ENCODE measurements at regions of chr1 and their contacts with region 1.

Region 1: DNA sequence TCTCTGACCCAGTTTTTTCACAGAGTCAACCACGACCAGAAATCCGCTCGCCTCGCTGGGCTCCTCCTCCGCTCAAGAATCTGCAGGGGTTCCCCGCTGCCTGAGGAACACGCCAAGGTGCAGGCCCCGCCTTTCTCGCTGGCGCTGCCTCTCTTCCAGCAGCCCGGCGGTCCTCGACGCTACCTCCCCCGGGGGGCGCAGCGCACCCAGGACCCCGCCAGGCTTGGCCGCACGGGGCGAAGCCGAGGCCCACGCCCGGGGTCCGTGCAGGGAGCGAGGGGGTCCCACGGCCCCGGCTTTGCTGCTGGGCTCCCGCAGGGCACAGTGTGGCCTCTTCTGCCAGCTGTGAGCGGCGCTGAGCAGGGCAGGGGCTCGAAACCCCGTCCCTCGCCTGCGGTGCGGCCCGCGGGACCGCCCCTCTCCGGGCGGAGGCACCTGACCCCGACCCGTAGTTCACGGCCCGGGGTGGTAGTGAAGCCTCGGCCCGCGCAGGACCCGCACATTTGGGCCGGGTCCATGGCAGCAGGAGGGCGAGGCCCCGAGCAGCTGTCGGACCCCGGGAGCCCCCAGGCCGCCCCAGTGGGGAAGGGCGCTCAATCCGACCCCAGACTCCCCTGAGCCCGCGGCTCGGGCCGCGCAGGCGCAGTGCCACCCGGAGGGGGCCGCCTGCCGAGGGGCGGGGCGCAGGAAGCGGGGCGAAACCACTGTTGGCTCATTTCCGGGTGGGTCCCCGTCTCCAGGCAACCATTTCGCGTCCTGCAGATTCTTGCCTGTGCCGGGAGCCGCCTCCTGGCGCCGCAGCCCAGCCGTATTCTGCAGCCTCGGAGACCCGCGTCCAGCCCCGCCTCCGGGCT is 10.0 kb upstream of the MMEL1 start:
- DNase-seq: peak; percentile 92
- H3K4me3 ChIP-seq: peak overlapping the region; percentile 96
- H3K27ac ChIP-seq: peak overlapping the region; percentile 80
- H3K4me1 ChIP-seq: peaks cover 6% of the 10 kb centered on the region
- H3K27me3 ChIP-seq: no peaks in the 10 kb centered on the region
- CTCF ChIP-seq: no peak

Region 2: GRCh38 chr1:2194898-2195673 is 447.7 kb before region 1 on chr1:
- intact Hi-C with region 1: loop called (anchors 10 kb)
- DNase-seq: peak; percentile 93
- H3K4me3 ChIP-seq: peak overlapping the region; percentile 56
- H3K27ac ChIP-seq: peak overlapping the region; percentile 98
- H3K4me1 ChIP-seq: peaks cover 31% of the 10 kb centered on the region
- H3K27me3 ChIP-seq: no peaks in the 10 kb centered on the region
- CTCF ChIP-seq: peak; percentile 97

Region 3: GRCh38 chr1:2391041-2391930 is 251.5 kb before region 1 on chr1 and contains the starts of genes MORN1 and RER1:
- intact Hi-C with region 1: no loop called
- DNase-seq: peak; percentile 99
- H3K4me3 ChIP-seq: peak within 1 kb of the TSS; percentile 72
- H3K27ac ChIP-seq: peak within 1 kb of the TSS; percentile 54
- H3K4me1 ChIP-seq: peaks cover 23% of the 10 kb centered on the region
- H3K27me3 ChIP-seq: no peaks in the 10 kb centered on the region
- CTCF ChIP-seq: no peak
- total RNA-seq, gene MORN1: 11.3 to 18.9 TPM
- total RNA-seq, gene RER1: 190 to 216 TPM

Region 4: GRCh38 chr1:2429780-2430591 is 212.8 kb before region 1 on chr1:
- intact Hi-C with region 1: loop called (anchors 10 kb)
- DNase-seq: no peak
- H3K4me3 ChIP-seq: no peak overlapping the region
- H3K27ac ChIP-seq: no peak overlapping the region
- H3K4me1 ChIP-seq: no peaks in the 10 kb centered on the region
- H3K27me3 ChIP-seq: no peaks in the 10 kb centered on the region
- CTCF ChIP-seq: peak; percentile 32

Region 5: GRCh38 chr1:2443277-2444137 is 199.3 kb before region 1 on chr1:
- intact Hi-C with region 1: no loop called
- DNase-seq: no peak
- H3K4me3 ChIP-seq: no peak overlapping the region
- H3K27ac ChIP-seq: no peak overlapping the region
- H3K4me1 ChIP-seq: no peaks in the 10 kb centered on the region
- H3K27me3 ChIP-seq: peaks cover 19% of the 10 kb centered on the region
- CTCF ChIP-seq: no peak

Region 6: DNA sequence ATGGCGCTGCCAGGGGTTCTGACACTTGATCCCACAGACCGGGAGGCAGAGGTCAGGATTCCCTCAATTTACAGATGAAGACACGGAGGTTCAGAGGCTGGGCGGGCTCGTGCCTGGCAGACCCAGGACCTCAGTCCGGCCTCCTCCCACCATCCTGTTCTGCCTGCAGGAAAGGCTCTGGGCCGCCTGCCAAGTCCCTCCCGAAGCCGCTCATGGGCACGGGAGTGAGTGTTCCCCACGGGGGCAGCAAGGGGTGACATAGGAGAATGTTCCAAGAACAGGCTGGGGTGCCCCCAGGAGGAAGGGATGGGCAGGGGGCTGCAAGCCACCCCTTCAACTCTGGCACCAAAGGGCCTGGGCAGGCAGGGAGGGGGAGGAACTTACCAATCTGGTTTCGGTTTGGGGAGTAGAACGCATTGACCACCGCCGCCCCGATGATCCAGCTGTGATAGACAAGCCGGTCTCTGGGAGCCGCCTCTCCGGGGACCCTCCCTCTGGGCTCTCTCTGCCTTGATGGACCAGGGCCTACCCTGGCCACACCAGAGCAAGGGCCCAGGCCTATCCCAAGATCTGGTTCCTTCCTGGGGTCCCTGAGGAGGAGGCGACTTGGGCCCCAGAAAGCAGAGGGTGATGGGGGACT is 48.7 kb before region 1 on chr1:
- intact Hi-C with region 1: loop called (anchors 10 kb)
- DNase-seq: peak; percentile 74
- H3K4me3 ChIP-seq: peak overlapping the region; percentile 3
- H3K27ac ChIP-seq: no peak overlapping the region
- H3K4me1 ChIP-seq: no peaks in the 10 kb centered on the region
- H3K27me3 ChIP-seq: no peaks in the 10 kb centered on the region
- CTCF ChIP-seq: no peak

Measured in colonic mucosa (tissue), 4 donors.